B cell (primary cell): ENCODE measurements at regions of chr6 and their contacts with region 1.

Region 1: DNA sequence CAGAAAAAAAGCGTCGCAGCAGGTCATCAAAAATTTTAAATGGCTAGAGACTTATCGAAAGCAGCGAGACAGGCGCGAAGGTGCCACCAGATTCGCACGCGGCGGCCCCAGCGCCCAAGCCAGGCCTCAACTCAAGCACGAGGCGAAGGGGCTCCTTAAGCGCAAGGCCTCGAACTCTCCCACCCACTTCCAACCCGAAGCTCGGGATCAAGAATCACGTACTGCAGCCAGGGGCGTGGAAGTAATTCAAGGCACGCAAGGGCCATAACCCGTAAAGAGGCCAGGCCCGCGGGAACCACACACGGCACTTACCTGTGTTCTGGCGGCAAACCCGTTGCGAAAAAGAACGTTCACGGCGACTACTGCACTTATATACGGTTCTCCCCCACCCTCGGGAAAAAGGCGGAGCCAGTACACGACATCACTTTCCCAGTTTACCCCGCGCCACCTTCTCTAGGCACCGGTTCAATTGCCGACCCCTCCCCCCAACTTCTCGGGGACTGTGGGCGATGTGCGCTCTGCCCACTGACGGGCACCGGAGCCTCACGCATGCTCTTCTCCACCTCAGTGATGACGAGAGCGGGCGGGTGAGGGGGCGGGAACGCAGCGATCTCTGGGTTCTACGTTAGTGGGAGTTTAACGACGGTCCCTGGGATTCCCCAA is at the start of gene EEF1A1:
- DNase-seq: peak; percentile 100
- ATAC-seq: peak; percentile 82
- H3K4me3 ChIP-seq: peak within 1 kb of the TSS; percentile 87 to 100 (median 98)
- H3K4me3 Mint-ChIP-seq: peak within 1 kb of the TSS; percentile 97
- H3K27ac ChIP-seq: peak within 1 kb of the TSS; percentile 98 to 99
- H3K27ac Mint-ChIP-seq: peak within 1 kb of the TSS; percentile 95
- H3K4me1 ChIP-seq: peaks cover 53 to 67% of the 10 kb centered on the region in 2 donors
- H3K4me1 Mint-ChIP-seq: peaks cover 66% of the 10 kb centered on the region
- H3K27me3 ChIP-seq: no peaks in the 10 kb centered on the region
- H3K27me3 Mint-ChIP-seq: no peaks in the 10 kb centered on the region
- CTCF ChIP-seq: no peak
- total RNA-seq, gene EEF1A1: 12,449 and 12,769 TPM in 2 replicates

Region 2: DNA sequence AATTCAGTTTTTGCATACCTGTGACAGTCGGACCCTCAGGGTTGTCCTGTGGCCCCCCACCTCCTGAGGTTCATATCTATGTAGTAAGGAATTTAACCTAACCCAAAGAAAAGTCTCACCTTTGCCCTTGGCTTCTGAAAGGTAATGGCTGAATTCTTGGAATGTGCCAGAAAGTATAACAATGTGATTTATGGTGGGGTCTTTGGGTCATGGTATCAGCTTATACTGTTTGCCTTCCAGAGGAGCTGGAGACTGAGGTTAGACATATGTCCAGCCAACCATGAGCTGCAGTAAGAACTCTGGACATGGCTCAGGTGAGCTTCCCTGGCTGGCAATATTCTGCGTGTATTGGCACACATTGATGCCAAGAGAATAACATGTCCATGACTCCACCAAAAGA is 99.3 kb before region 1 on chr6:
- CTCF ChIA-PET with region 1: no interaction called
- POLR2A ChIA-PET with region 1: no interaction called
- intact Hi-C with region 1: no loop called
- DNase-seq: no peak
- ATAC-seq: no peak
- H3K4me3 ChIP-seq: no peak overlapping the region
- H3K4me3 Mint-ChIP-seq: no peak overlapping the region
- H3K27ac ChIP-seq: no peak overlapping the region
- H3K27ac Mint-ChIP-seq: no peak overlapping the region
- H3K4me1 ChIP-seq: no peaks in the 10 kb centered on the region
- H3K4me1 Mint-ChIP-seq: no peaks in the 10 kb centered on the region
- H3K27me3 ChIP-seq: no peaks in the 10 kb centered on the region
- H3K27me3 Mint-ChIP-seq: no peaks in the 10 kb centered on the region
- CTCF ChIP-seq: no peak

Region 3: DNA sequence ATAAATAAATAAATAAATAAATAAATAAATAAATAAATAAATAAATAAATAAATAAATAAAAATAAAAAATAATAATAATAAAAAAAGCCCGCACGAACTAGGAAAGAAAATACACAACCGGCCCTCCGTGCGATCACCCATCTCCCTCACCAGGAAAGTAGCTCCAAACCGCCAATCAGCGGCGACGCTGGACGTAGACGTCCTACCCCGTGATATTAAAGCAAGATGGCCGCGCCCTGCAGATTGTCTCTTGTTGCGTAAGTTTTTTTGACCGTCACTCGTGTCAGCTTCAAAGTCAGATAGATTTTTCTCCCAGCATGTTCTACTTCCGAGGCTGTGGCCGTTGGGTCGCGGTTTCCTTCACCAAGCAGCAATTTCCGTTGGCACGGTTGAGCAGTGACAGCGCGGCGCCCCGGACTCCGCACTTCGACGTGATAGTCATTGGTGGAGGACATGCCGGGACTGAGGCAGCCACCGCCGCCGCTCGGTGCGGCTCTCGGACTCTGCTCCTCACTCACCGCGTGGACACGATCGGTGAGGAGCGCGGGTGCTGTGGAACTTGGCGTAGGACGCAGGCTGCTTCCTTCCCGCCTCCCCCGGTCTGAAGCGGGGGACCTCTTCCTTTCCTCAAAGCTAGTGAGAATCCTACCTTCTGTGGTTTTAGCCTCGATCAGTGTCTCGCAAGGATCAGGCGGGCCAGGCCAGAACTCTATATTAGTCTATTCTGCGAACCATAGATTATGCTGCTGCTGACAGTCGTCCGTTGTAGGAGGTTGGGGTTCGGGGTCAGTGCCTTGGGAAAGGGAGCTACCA is 59.1 kb before region 1 on chr6 and contains the start of gene MTO1:
- CTCF ChIA-PET with region 1: interaction called, 5 read pairs
- POLR2A ChIA-PET with region 1: interaction called, 29 read pairs
- intact Hi-C with region 1: no loop called
- DNase-seq: peak; percentile 91
- ATAC-seq: peak; percentile 94
- H3K4me3 ChIP-seq: peak within 1 kb of the TSS; percentile 66 to 99 (median 78)
- H3K4me3 Mint-ChIP-seq: peak within 1 kb of the TSS; percentile 100
- H3K27ac ChIP-seq: peak within 1 kb of the TSS; percentile 90 to 96
- H3K27ac Mint-ChIP-seq: peak within 1 kb of the TSS; percentile 97
- H3K4me1 ChIP-seq: peaks cover 12 to 31% of the 10 kb centered on the region in 2 donors
- H3K4me1 Mint-ChIP-seq: peaks cover 29% of the 10 kb centered on the region
- H3K27me3 ChIP-seq: no peaks in the 10 kb centered on the region
- H3K27me3 Mint-ChIP-seq: no peaks in the 10 kb centered on the region
- CTCF ChIP-seq: no peak
- total RNA-seq, gene MTO1: 79.5 and 84.4 TPM in 2 replicates

Region 4: DNA sequence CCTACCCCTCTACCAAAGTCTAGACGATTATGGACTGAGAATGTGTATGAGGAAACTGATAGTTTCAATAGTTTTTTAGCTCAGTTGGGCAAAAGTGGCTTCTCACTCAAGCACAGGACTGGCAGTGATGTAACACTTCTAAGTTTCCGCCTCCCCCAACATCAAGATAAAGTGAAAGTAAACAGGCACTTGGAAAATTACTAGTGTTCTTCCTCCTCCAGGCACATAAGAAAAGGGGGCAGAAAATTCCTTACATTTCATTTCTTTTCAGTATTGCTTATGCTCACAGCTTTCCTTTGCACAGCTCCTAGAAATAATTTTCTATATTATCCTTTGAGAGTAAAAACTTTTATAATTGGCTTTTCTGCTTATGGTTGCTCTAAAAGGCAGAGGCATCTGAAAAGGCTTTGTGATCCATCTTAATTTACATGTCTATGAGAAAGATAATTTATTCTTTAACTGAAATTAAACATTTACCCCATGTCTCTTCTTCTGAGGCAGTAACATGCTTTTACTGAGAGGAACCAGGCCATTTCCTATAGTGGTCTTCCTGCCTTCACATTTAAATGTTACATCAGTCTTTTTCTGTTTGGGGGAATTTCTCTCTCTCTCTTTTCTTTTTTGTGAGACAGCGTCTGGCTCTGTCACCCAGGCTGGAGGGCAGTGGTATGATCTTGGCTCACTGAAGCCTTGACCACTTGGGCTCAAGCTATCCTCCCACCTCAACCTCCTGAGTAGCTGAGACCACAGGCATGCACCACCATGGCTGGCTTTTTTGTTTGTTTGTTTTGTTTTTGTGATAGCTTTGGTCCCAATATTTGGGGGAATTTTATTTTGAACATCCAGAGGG is 65.0 kb after region 1 on chr6:
- CTCF ChIA-PET with region 1: interaction called, 22 read pairs
- POLR2A ChIA-PET with region 1: interaction called, 43 read pairs
- intact Hi-C with region 1: loop called (anchors 1 kb)
- DNase-seq: peak; percentile 83
- ATAC-seq: peak; percentile 76
- H3K4me3 ChIP-seq: peak overlapping the region; percentile 17 to 65 (median 36)
- H3K4me3 Mint-ChIP-seq: peak overlapping the region; percentile 83
- H3K27ac ChIP-seq: peak overlapping the region; percentile 93 to 98
- H3K27ac Mint-ChIP-seq: peak overlapping the region; percentile 99
- H3K4me1 ChIP-seq: peaks cover 21 to 33% of the 10 kb centered on the region in 2 donors
- H3K4me1 Mint-ChIP-seq: peaks cover 19% of the 10 kb centered on the region
- H3K27me3 ChIP-seq: no peaks in the 10 kb centered on the region
- H3K27me3 Mint-ChIP-seq: no peaks in the 10 kb centered on the region
- CTCF ChIP-seq: no peak

Region 5: GRCh38 chr6:75243333-75244062 is 1722.7 kb after region 1 on chr6 and contains the start of gene COX7A2:
- CTCF ChIA-PET with region 1: no interaction called
- POLR2A ChIA-PET with region 1: no interaction called
- intact Hi-C with region 1: loop called (anchors 1 kb)
- DNase-seq: peak; percentile 92
- ATAC-seq: peak; percentile 98
- H3K4me3 ChIP-seq: peak within 1 kb of the TSS; percentile 85 to 98 (median 90)
- H3K4me3 Mint-ChIP-seq: peak within 1 kb of the TSS; percentile 99
- H3K27ac ChIP-seq: peak within 1 kb of the TSS; percentile 92 to 97
- H3K27ac Mint-ChIP-seq: peak within 1 kb of the TSS; percentile 98
- H3K4me1 ChIP-seq: peaks cover 5 to 10% of the 10 kb centered on the region in 2 donors
- H3K4me1 Mint-ChIP-seq: peaks cover 24% of the 10 kb centered on the region
- H3K27me3 ChIP-seq: peaks cover 0 to 14% (median 4%) of the 10 kb centered on the region in 4 experiments
- H3K27me3 Mint-ChIP-seq: peaks cover 16% of the 10 kb centered on the region
- CTCF ChIP-seq: no peak
- total RNA-seq, gene COX7A2: 157 and 160 TPM in 2 replicates